Left lung (tissue), 14 donors: ENCODE measurements at regions of chr11 and their contacts with region 1.

Region 1: DNA sequence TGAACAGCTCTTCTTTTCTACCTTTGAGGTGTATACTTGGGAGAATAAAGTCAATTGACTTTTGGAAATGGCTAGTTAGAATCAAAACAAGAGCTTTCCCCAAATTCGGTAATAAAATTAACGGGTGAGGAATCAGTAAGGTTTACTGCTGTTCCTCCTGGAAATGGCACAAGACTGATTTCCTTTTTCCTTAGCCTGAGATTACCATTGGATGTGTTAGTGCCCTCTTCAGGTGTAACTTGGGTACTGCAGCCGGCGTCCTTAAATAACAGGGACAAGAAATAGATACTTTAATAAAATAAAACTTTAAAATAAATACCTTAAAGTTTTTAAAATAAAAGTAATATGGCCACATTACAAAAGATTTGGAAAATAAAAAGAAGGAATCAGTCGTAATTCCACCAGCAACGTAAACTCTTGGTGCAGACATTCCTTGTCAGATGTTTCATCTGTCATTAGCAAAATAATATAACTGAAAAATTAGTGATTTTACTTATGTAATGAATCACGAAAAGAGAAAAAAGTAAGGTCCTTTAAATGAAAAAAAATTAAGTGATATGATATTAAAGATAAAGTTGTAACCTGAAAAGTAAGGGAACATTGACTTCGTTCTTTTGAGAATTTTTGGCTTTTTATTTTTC is 29.7 kb downstream of the ZFTA start:
- DNase-seq: peak in 3 of 4 donors; percentile 52 to 74 (median 59)
- ATAC-seq: peak; percentile 96
- H3K4me3 ChIP-seq: no peak overlapping the region
- H3K27ac ChIP-seq: no peak overlapping the region
- H3K4me1 ChIP-seq: peaks cover 0 to 10% of the 10 kb centered on the region in 2 donors
- H3K27me3 ChIP-seq: no peaks in the 10 kb centered on the region
- CTCF ChIP-seq: peak; percentile 85 to 97

Region 2: GRCh38 chr11:63641727-63642126 is 97.1 kb before region 1 on chr11:
- intact Hi-C with region 1: loop called in 1 of 2 experiments (anchors 10 kb)
- DNase-seq: no peak
- ATAC-seq: peak; percentile 50
- H3K4me3 ChIP-seq: no peak overlapping the region
- H3K27ac ChIP-seq: no peak overlapping the region
- H3K4me1 ChIP-seq: no peaks in the 10 kb centered on the region
- H3K27me3 ChIP-seq: no peaks in the 10 kb centered on the region
- CTCF ChIP-seq: no peak